ENCODE measurements at regions of chr1 and their contacts with region 1.

Region 1: DNA sequence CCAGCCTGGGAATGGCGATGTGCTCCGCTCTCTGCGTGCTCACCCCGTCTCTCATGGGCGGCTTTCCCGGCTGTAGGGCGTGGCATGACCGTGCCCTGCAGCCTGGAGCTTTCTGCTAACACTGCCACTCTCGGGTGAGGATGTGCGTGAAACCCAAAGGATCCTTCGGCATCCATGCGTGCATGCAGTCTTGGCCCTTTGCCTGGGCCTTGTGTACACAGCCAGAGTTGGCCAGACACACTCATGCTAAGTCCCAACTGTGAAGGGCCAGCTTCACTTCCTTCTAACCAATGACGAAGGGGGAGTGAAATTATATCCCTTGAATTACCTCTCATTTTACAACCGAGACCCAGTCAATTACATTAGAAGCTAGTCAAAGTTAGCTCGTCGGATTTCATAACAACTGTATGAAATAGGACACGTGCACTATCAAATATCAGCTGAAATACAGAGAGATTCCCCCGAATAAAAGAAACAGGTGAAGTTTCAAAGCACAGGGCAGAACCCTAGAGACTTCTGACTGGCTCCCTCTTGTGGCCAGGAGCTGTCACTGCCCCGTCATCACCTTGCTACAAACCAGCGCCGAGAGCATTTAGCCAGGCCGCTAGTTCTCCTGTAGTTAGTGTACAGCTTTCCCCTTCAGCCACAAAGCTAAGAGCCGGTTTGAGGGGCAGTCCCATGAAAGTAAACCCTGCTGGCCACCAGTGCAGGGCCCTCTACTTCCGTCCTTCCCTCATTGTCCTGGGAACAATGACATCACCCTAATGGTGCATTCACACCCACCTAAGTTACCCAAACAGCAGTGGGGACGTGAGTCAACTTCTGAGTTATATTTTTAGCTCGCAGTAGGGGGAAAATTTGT is 63.4 kb upstream of the COA6 start:
- DNase-seq: peak; percentile 87
- ATAC-seq: peak; percentile 77
- H3K4me3 Mint-ChIP-seq: peak overlapping the region; percentile 26
- H3K27ac Mint-ChIP-seq: peak overlapping the region; percentile 59
- H3K4me1 Mint-ChIP-seq: peaks cover 43% of the 10 kb centered on the region
- H3K27me3 Mint-ChIP-seq: no peaks in the 10 kb centered on the region

Region 2: GRCh38 chr1:234125283-234125682 is 184.5 kb before region 1 on chr1:
- CTCF ChIA-PET with region 1: interaction called, 8 read pairs
- POLR2A ChIA-PET with region 1: no interaction called
- intact Hi-C with region 1: loop called in 1 of 2 experiments (anchors 1 kb)
- DNase-seq: peak; percentile 73
- ATAC-seq: peak; percentile 73
- H3K4me3 Mint-ChIP-seq: no peak overlapping the region
- H3K27ac Mint-ChIP-seq: no peak overlapping the region
- H3K4me1 Mint-ChIP-seq: no peaks in the 10 kb centered on the region
- H3K27me3 Mint-ChIP-seq: peaks cover 27% of the 10 kb centered on the region

Region 3: DNA sequence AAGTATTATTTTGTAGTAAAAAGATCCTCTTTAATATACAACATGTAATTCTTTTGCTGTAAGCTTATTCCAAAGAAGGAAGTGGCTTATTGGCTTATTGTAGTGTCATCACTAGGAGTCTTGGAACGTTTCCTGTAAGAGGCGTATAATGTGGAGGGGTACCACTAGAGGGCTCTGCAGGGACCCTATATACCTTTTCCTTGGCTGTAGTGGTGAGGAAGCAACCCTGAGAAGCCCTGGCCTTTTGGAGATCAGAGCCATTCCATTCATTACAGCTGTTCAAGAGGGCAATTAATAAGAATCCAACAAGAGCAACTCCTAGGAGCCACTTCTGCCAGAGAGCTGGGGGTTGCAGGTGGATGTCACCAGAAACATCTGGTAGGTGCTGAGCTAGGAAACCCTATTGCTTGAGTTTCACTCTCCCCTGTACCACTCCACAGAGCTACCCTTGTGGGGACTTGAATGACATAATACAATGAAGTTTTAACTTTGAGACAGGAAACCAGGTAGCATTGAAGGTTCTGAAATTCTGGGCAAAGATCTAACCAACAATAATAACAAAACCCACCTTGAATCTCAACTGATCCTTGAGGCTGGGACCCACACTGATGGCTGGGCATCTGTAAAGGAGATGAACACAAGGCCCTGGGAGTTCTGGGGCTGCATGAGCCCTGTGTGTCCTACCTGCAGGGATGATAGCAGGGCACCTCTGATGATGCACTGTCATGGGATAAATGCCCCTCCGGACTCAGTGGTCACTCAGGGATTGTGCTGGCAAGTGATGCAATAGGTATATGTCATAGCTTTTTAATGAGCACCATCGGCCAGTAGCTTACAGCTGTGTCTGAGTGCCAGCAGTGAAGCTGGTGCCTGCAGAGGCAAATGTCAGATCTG is 96.8 kb before region 1 on chr1:
- CTCF ChIA-PET with region 1: interaction called, 97 read pairs
- POLR2A ChIA-PET with region 1: no interaction called
- intact Hi-C with region 1: loop called (anchors 1 kb)
- DNase-seq: peak; percentile 47
- ATAC-seq: peak; percentile 65
- H3K4me3 Mint-ChIP-seq: no peak overlapping the region
- H3K27ac Mint-ChIP-seq: no peak overlapping the region
- H3K4me1 Mint-ChIP-seq: peaks cover 21% of the 10 kb centered on the region
- H3K27me3 Mint-ChIP-seq: peaks cover 31% of the 10 kb centered on the region

Region 4: GRCh38 chr1:234244482-234244881 is 65.3 kb before region 1 on chr1:
- CTCF ChIA-PET with region 1: interaction called, 11 read pairs
- POLR2A ChIA-PET with region 1: no interaction called
- intact Hi-C with region 1: no loop called
- DNase-seq: no peak
- ATAC-seq: peak; percentile 48
- H3K4me3 Mint-ChIP-seq: no peak overlapping the region
- H3K27ac Mint-ChIP-seq: no peak overlapping the region
- H3K4me1 Mint-ChIP-seq: peaks cover 20% of the 10 kb centered on the region
- H3K27me3 Mint-ChIP-seq: peaks cover 15% of the 10 kb centered on the region

Region 5: DNA sequence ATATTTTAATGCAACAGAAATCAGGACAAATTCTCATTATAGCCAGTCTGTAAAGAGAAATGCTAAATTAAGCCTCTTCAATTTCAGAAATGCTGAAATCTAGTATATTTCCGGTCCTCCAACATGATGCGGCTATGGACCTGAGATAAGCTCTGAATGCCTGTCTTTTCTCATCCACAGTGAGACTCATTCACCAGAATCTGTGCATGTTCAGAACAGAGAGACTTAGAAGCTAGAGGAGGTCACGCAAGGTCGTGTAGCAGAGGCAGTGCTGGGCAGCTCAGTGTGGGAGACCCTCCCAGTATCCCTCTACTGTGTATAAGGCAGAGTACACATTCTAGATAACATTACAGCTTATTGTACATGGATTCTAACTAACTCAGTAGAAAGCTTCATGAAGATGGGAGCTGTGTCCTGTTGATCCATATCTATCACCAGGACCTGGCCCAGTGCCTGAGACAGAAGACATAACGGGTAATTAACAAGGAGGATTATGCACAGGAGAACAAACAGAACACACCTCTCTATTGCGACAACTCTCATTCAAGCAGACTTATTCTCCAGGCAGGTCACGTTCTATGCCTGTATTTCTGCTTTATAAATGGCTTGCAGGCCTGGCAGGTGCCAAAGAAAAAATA is 33.6 kb before region 1 on chr1:
- CTCF ChIA-PET with region 1: interaction called, 11 read pairs
- POLR2A ChIA-PET with region 1: no interaction called
- intact Hi-C with region 1: loop called (anchors 1 kb)
- DNase-seq: no peak
- ATAC-seq: no peak
- H3K4me3 Mint-ChIP-seq: no peak overlapping the region
- H3K27ac Mint-ChIP-seq: no peak overlapping the region
- H3K4me1 Mint-ChIP-seq: peaks cover 13% of the 10 kb centered on the region
- H3K27me3 Mint-ChIP-seq: peaks cover 22% of the 10 kb centered on the region

Region 6: GRCh38 chr1:234326497-234327366 is 16.9 kb after region 1 on chr1:
- CTCF ChIA-PET with region 1: interaction called, 69 read pairs
- POLR2A ChIA-PET with region 1: no interaction called
- intact Hi-C with region 1: loop called in 1 of 2 experiments (anchors 1 kb)
- DNase-seq: peak; percentile 83
- ATAC-seq: peak; percentile 88
- H3K4me3 Mint-ChIP-seq: peak overlapping the region; percentile 69
- H3K27ac Mint-ChIP-seq: peak overlapping the region; percentile 61
- H3K4me1 Mint-ChIP-seq: peaks cover 22% of the 10 kb centered on the region
- H3K27me3 Mint-ChIP-seq: peaks cover 16% of the 10 kb centered on the region